Gastrocnemius medialis (tissue), 4 donors: ENCODE measurements at regions of chr14 and their contacts with region 1.

Region 1: DNA sequence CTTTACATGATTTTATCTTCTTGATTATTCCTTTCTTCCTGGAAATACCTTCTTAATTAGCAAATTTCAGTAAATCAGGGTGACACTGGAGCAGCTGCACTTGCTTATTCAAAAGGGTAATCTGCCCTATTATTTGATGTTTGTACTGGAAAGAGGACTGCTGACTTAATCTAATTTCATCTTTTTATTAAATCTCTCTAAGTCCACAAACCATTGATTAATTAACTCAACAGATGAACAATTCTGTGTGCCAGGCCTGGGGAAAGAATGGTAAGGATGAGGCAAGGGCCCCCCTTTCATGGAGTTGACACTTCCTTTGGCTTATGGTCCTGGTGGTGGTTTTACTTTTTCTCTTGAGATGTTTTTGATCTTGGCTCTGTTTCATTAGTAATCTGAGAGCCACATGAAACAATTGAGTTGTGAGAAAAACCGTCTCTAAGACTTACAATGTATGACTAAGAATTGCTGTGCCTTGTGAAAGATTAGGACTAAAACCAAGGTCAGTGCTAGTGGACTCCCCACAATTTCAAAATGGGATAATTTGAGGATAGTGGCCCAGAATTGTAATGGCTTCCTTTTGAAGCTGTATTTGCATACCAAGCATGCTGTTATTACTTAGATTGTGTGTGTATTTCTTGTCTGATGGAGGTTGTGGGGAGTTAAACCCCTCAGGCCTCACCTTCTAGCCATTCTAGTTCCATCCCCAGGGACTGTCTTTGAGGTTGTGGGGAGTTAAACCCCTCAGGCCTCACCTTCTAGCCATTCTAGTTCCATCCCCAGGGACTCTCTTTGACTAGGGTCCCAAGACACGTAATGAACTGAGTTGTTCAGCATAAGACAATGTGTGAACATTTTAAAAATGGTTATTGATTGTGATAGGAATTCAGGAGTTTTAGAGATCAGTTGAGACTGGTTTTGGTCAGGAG is 52.6 kb upstream of the EVL start:
- DNase-seq: no peak
- ATAC-seq: no peak
- H3K4me3 ChIP-seq: no peak overlapping the region
- H3K27ac ChIP-seq: no peak overlapping the region
- H3K4me1 ChIP-seq: peaks cover 12 to 22% of the 10 kb centered on the region in 2 donors
- H3K27me3 ChIP-seq: no peaks in the 10 kb centered on the region
- CTCF ChIP-seq: no peak
- POLR2A ChIP-seq: no peak

Region 2: DNA sequence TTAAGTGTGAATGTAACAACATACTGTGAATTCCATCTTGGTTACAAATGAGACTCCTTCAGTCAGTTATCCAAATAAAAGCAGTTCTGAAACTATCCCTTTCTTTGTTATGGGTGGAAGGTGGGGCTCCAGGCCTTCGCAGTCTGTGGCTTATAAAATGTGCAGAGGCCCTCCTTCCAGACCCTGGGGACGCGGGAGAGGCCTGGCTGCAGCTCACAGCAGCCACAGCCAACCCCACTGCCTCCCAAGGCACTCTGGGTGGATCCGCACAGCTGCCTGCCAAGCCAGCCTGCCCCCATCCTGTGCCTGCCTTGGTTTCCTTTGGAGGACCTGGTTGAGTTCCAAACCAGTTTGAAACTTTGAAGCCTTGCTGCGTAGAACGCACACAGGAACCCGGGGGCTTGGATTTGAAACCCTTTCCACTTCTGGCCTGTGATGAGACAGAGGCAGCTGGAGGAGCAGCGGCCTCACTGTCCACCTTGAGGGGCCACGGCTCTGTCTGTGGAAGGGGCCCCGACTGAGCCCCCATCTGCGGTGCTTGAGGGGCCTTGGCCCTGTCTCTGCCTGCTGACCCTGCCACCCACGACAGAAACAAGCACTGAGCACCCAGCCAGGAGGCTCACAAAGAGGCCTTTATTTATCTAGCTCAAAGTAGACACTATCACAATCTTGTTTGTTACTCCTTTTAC is 501.1 kb before region 1 on chr14:
- in situ Hi-C with region 1: no loop called
- intact Hi-C with region 1: no loop called
- DNase-seq: no peak
- ATAC-seq: no peak
- H3K4me3 ChIP-seq: no peak overlapping the region
- H3K27ac ChIP-seq: no peak overlapping the region
- H3K4me1 ChIP-seq: peaks cover 0 to 3% of the 10 kb centered on the region in 2 donors
- H3K27me3 ChIP-seq: no peaks in the 10 kb centered on the region
- CTCF ChIP-seq: no peak
- POLR2A ChIP-seq: no peak

Region 3: GRCh38 chr14:100025111-100025510 is 12.4 kb after region 1 on chr14:
- in situ Hi-C with region 1: no loop called
- intact Hi-C with region 1: loop called (anchors 1 kb)
- DNase-seq: peak; percentile 10 to 21
- ATAC-seq: no peak
- H3K4me3 ChIP-seq: no peak overlapping the region
- H3K27ac ChIP-seq: no peak overlapping the region
- H3K4me1 ChIP-seq: peaks cover 28 to 39% of the 10 kb centered on the region in 2 donors
- H3K27me3 ChIP-seq: no peaks in the 10 kb centered on the region
- CTCF ChIP-seq: peak in 1 of 5 experiments; percentile 9
- POLR2A ChIP-seq: no peak